Mammary epithelial cell (primary cell): ENCODE measurements at regions of chr5 and their contacts with region 1.

Region 1: DNA sequence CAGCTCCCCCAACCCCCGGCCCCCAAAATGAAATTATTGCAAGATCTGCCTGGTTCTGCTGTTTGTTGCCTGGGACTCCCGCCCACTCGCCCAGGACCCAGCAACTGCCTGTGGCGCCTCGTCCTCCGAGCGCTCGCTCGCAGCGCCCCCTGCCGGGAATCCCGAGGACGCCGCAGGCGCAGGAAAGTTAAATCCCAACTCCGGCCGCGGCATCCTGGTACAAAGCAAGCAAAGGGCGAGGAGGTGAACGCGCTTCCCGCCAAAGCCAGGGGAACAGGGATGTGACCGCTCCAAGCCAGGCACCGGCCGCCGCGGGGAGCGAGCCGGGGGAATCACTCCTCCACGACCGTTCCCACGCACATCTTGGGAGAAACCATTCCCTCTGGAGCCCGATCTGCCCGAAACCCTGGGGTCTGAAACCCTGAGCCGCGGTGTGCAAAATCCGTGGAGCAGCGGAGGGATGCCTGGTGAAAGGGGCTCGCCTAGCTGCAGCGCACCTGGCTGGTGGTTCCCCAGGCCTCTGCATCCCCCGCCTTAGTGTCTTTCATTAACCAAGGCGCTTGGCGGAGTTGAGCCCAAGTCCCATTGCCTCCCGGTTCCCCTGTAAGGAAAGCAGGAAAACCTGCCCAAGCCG is 1.3 kb downstream of the SEMA5A start:
- DNase-seq: peak; percentile 85
- H3K4me3 ChIP-seq: peak overlapping the region; percentile 55 to 86 (median 78)
- H3K27ac ChIP-seq: peak overlapping the region; percentile 76
- H3K4me1 ChIP-seq: peaks cover 20% of the 10 kb centered on the region
- H3K27me3 ChIP-seq: no peaks in the 10 kb centered on the region
- CTCF ChIP-seq: peak; percentile 77 to 94

Region 2: GRCh38 chr5:9059920-9060691 is 484.5 kb before region 1 on chr5:
- CTCF ChIA-PET with region 1: no interaction called
- dilution Hi-C with region 1: no loop called
- in situ Hi-C with region 1: no loop called
- intact Hi-C with region 1: loop called (anchors 10 kb)
- DNase-seq: peak; percentile 97
- H3K4me3 ChIP-seq: no peak overlapping the region
- H3K27ac ChIP-seq: peak overlapping the region; percentile 87
- H3K4me1 ChIP-seq: peaks cover 44% of the 10 kb centered on the region
- H3K27me3 ChIP-seq: no peaks in the 10 kb centered on the region
- CTCF ChIP-seq: no peak

Region 3: GRCh38 chr5:9207817-9208418 is 336.7 kb before region 1 on chr5:
- CTCF ChIA-PET with region 1: no interaction called
- dilution Hi-C with region 1: no loop called
- in situ Hi-C with region 1: no loop called
- intact Hi-C with region 1: loop called (anchors 2 kb)
- DNase-seq: peak; percentile 23
- H3K4me3 ChIP-seq: no peak overlapping the region
- H3K27ac ChIP-seq: no peak overlapping the region
- H3K4me1 ChIP-seq: peaks cover 22% of the 10 kb centered on the region
- H3K27me3 ChIP-seq: no peaks in the 10 kb centered on the region
- CTCF ChIP-seq: peak; percentile 42 to 51

Region 4: DNA sequence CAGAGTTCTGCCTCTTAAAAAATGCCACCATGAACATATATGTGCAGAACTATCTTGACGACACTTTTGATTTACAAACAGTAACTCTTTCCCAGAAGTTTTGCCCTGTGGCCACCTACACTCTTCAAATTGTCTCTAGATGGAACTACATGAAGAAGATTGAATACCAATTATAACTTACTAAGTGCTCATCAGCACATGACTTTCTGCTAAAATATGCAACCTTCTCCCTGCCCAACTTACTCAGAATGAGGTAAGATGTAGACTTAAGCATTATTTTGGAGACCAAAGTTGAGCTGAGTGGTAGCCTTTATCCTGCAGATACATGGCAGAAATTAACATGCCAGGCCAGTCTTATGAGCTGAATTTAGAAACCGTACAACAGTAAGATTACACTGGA is 104.1 kb before region 1 on chr5:
- CTCF ChIA-PET with region 1: no interaction called
- dilution Hi-C with region 1: no loop called
- in situ Hi-C with region 1: no loop called
- intact Hi-C with region 1: loop called (anchors 5 kb)
- DNase-seq: peak; percentile 64
- H3K4me3 ChIP-seq: no peak overlapping the region
- H3K27ac ChIP-seq: peak overlapping the region; percentile 15
- H3K4me1 ChIP-seq: peaks cover 34% of the 10 kb centered on the region
- H3K27me3 ChIP-seq: no peaks in the 10 kb centered on the region
- CTCF ChIP-seq: no peak

Region 5: GRCh38 chr5:9562141-9562540 is 17.5 kb after region 1 on chr5:
- CTCF ChIA-PET with region 1: no interaction called
- dilution Hi-C with region 1: no loop called
- in situ Hi-C with region 1: no loop called
- intact Hi-C with region 1: no loop called
- DNase-seq: no peak
- H3K4me3 ChIP-seq: no peak overlapping the region
- H3K27ac ChIP-seq: no peak overlapping the region
- H3K4me1 ChIP-seq: no peaks in the 10 kb centered on the region
- H3K27me3 ChIP-seq: no peaks in the 10 kb centered on the region
- CTCF ChIP-seq: no peak

Region 6: DNA sequence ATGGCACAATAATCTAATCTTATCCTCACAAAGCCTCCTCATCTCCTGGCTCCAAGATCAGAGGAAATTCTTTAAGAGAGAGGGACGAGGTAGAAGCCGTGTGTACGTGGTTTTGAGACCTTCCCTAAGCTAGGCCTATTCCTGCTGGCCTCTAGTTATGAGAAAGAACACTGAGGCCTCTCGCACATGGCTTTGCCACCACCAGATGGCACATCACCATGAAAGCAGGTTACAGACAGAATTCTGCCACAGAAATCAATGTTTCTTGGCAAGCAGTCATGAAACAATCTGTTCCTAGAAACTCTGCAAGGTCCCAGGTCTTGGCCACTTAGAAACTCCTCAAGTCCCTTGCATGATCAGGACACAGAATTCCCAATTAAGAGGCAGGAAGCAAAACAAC is 353.7 kb after region 1 on chr5:
- CTCF ChIA-PET with region 1: no interaction called
- dilution Hi-C with region 1: no loop called
- in situ Hi-C with region 1: no loop called
- intact Hi-C with region 1: loop called (anchors 10 kb)
- DNase-seq: peak; percentile 13
- H3K4me3 ChIP-seq: no peak overlapping the region
- H3K27ac ChIP-seq: no peak overlapping the region
- H3K4me1 ChIP-seq: no peaks in the 10 kb centered on the region
- H3K27me3 ChIP-seq: no peaks in the 10 kb centered on the region
- CTCF ChIP-seq: peak; percentile 49 to 74